Breast epithelium (tissue), 4 donors: ENCODE measurements at regions of chr16 and their contacts with region 1.

Region 1: GRCh38 chr16:57713596-57713995 is 19.0 kb downstream of the DRC7 start:
- DNase-seq: no peak
- H3K4me3 ChIP-seq: no peak overlapping the region
- H3K27ac ChIP-seq: no peak overlapping the region
- H3K4me1 ChIP-seq: no peaks in the 10 kb centered on the region
- H3K27me3 ChIP-seq: no peaks in the 10 kb centered on the region
- CTCF ChIP-seq: no peak
- POLR2A ChIP-seq: no peak

Region 2: GRCh38 chr16:57740423-57741075 is 27.0 kb after region 1 on chr16:
- intact Hi-C with region 1: loop called (anchors 1 kb)
- DNase-seq: peak in 1 of 2 donors; percentile 58
- H3K4me3 ChIP-seq: no peak overlapping the region
- H3K27ac ChIP-seq: peak overlapping the region; percentile 84 to 88
- H3K4me1 ChIP-seq: peaks cover 0 to 5% of the 10 kb centered on the region in 2 donors
- H3K27me3 ChIP-seq: no peaks in the 10 kb centered on the region
- CTCF ChIP-seq: no peak
- POLR2A ChIP-seq: no peak